Head of caudate nucleus (tissue), 42 donors: ENCODE measurements at regions of chr7 and their contacts with region 1.

Region 1: GRCh38 chr7:70040970-70041766 is 442.9 kb downstream of the AUTS2 start:
- DNase-seq: no peak

Region 2: GRCh38 chr7:69941077-69941651 is 100.0 kb before region 1 on chr7:
- intact Hi-C with region 1: no loop called
- DNase-seq: peak in 22 of 42 donors; percentile 9 to 57 (median 22)

Region 3: DNA sequence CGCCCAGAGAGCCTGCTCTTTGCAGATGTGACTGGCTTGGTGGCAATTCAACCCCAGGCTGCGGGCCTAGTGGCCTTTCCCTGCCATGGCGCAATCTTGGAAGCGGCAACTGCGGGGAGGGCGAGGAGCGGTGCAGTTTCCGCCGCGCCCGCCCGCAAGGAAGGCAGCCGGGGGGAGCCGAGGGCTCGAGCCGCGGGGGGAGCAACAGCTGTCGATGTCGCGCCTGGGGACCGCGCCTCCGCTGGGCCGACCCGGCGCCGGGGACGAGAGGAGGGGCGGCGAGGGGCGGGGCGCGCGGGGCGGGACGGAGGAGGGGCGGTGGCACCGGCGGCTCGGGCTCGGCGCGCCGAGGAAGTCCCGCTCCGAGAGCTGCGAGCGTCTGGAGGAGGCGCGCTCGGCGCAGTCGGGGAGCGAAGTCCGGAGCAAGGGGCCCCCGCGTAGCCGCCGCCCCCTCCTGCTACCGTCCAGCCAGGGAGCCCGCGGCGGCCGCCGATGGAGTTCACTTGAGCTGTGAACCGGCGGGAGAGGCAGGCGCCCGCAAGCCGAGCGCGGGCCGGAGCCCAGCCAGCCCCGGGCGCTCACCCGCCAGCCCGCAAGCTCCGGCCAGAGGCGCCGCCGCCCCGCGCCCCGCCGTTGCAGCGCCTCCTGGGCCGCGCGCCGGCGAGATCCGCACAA is 652.7 kb after region 1 on chr7:
- intact Hi-C with region 1: loop called (anchors 10 kb)
- DNase-seq: peak in 41 of 42 donors; percentile 40 to 91 (median 77)